Activated CD8-positive, alpha-beta T cell treated with anti-CD3 and anti-CD28 coated beads, Interleukin-2, amount 10 ng/mL, durations not matched to agents 7 days and 5 days (primary cell): ENCODE measurements at regions of chrX and their contacts with region 1.

Region 1: DNA sequence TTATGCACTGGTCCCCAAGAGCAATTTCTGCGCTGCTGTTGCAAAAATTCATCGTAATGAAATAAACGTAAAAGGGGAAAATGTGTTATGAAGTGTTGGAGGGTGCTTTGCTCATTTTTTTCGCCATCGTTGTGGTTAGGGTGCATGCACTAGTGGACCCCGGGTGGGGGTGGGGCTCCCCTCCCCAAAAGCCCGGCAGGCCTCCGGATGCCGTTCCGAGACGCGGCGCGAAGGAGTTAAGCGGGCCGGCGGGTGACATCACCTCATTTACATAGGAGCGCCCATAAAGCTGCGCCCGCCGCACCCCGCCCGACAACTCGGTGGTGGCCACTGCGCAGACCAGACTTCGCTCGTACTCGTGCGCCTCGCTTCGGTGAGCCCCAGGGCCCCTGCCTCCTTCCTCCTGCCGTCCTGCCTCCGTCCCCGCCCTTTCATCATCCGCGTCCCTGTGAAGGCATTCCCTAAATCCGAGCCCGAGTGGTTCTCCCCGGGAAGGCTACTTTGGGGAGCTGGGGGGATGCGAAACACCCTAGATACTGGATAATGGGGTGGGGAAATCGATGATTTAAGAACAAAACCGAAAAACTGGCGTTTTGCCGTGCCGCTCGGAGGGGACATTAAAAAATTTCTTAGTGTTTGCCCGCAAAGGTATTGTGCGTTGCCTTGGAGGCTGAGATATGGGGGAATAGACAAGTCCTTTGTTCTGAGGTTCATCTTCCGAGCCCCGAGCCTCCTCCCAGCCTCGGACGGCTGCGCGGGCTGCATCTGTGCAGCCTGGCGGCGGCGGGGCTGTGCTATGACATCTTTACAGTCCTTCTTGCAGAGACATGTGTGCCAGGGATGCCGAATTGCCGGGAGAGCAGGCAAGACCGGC is at the start of gene TMSB4X:
- DNase-seq: peak; percentile 90
- ATAC-seq: peak; percentile 61
- H3K4me3 Mint-ChIP-seq: peak within 1 kb of the TSS; percentile 95
- H3K27ac Mint-ChIP-seq: peak within 1 kb of the TSS; percentile 99
- H3K4me1 Mint-ChIP-seq: peaks cover 30% of the 10 kb centered on the region
- H3K27me3 Mint-ChIP-seq: no peaks in the 10 kb centered on the region
- total RNA-seq, gene TMSB4X: 8,800 to 8,961 TPM

Region 2: GRCh38 chrX:12919051-12919450 is 56.0 kb before region 1 on chrX:
- CTCF ChIA-PET with region 1: no interaction called
- POLR2A ChIA-PET with region 1: no interaction called
- DNase-seq: no peak
- ATAC-seq: no peak
- H3K4me3 Mint-ChIP-seq: no peak overlapping the region
- H3K27ac Mint-ChIP-seq: no peak overlapping the region
- H3K4me1 Mint-ChIP-seq: peaks cover 3% of the 10 kb centered on the region
- H3K27me3 Mint-ChIP-seq: no peaks in the 10 kb centered on the region

Region 3: DNA sequence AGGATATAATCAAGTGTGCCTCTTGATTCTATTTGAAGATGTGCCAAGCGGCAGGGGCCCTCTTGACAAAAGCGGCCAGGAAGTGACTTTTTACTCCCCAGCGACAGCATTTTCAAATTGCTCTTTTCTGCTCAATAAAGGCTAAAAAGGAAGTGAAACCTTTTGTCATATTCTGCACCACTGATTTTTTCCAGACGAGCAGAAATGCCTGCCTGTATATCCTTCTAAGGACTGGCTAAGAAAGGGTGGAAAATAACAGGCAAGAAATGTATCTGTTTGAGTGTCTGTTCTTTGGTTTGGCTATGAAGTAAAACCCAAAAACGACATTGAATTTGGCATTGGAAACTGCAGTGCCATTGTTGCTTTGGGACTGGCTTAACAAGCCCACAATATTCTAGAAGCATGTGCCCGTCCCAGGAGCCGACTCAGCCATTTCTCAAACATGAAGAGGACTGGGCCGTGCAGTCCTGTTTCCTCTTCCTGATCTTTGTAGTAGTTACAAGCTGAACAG is 25.3 kb after region 1 on chrX:
- CTCF ChIA-PET with region 1: interaction called, 12 read pairs
- POLR2A ChIA-PET with region 1: interaction called, 211 read pairs
- DNase-seq: peak; percentile 58
- ATAC-seq: peak; percentile 59
- H3K4me3 Mint-ChIP-seq: peak overlapping the region; percentile 68
- H3K27ac Mint-ChIP-seq: peak overlapping the region; percentile 96
- H3K4me1 Mint-ChIP-seq: peaks cover 66% of the 10 kb centered on the region
- H3K27me3 Mint-ChIP-seq: no peaks in the 10 kb centered on the region

Region 4: GRCh38 chrX:13005661-13006473 is 30.8 kb after region 1 on chrX:
- CTCF ChIA-PET with region 1: interaction called, 12 read pairs
- POLR2A ChIA-PET with region 1: interaction called, 211 read pairs
- DNase-seq: no peak
- ATAC-seq: peak; percentile 34
- H3K4me3 Mint-ChIP-seq: peak overlapping the region; percentile 58
- H3K27ac Mint-ChIP-seq: peak overlapping the region; percentile 98
- H3K4me1 Mint-ChIP-seq: peaks cover 67% of the 10 kb centered on the region
- H3K27me3 Mint-ChIP-seq: no peaks in the 10 kb centered on the region

Region 5: DNA sequence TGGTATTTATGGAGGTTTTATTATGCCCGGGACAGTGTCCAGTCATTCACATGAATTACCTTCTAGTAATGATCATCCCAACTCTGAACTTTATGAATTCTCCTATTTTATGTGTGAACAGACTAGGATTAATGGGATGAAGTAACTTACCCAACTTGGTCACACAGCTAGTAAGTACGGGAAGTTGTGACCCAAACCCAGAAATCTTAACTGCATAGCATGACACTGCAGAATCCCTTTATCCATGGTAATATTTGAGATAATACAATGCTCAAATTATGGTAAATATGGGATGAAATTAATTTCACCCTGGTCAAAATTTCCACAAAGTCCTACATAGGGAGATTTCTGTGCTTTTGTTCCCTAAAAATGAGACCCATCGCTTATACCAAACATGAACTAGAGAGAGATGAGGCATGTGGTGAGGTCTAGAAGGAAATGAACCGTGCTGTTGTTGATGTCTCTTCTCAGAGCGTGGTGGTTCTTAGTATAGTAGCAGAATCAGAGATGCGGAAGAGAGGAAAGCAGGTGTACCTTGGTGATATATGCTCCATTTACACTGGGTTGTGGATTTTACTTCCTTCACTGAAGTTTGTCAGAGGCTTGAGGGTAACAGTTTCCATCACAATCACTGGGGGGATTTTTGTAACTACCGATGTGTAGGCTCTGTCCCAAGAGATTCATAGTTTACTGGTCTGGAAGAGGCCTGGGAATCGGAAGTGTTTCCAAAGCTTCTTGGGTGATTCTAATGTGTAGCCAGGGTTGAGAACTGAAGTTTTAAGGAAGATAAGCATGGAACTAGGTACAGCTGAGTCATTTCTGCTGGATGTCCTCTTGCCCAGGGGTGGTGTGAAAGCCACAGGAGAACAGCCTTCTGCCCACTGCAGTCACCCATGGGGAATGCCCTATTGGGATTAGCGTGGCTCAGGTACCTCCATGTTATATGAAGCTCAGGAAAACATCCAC is 99.5 kb after region 1 on chrX:
- CTCF ChIA-PET with region 1: interaction called, 4 read pairs
- POLR2A ChIA-PET with region 1: interaction called, 28 read pairs
- DNase-seq: no peak
- ATAC-seq: peak; percentile 72
- H3K4me3 Mint-ChIP-seq: peak overlapping the region; percentile 12
- H3K27ac Mint-ChIP-seq: peak overlapping the region; percentile 80
- H3K4me1 Mint-ChIP-seq: peaks cover 56% of the 10 kb centered on the region
- H3K27me3 Mint-ChIP-seq: no peaks in the 10 kb centered on the region

Region 6: DNA sequence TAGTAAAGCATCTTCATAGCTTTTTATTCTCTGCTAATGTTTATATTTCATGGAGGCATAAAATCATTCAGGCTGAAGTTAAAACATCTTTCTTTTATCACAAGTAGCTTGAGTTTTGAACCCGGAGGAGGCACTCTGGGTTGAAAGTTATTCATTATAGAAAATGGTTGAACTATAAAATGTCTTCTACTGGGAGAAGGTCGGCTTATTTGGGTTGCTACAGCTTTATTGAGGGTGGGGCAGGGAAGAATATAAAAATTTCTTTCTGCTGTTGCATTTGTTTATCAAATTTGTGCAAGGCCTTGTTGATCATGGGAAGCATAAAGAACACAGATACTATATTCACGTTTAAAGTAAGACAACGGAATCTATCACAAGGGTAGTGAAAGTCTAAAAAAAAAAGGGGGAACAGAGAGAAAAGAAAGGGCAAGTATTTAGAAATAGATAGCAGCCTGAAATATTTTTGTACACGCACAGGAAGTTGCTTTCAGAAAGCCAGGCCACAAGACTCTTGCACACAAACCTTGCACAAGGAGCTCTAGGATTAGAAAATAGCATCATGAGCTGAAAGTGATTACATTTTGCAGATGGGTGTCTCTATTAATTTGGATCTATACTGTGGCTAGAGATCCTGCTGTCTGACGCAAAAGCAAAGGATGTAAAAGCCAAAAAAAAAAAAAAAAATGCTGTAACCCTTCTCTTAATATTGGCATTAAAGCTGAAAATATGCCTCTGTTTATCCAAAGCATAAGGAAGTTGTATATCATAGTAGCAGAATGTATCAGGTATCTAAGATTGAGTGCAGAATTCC is 106.6 kb after region 1 on chrX:
- CTCF ChIA-PET with region 1: interaction called, 13 read pairs
- POLR2A ChIA-PET with region 1: interaction called, 779 read pairs
- DNase-seq: no peak
- ATAC-seq: peak; percentile 27
- H3K4me3 Mint-ChIP-seq: peak overlapping the region; percentile 63
- H3K27ac Mint-ChIP-seq: peak overlapping the region; percentile 95
- H3K4me1 Mint-ChIP-seq: peaks cover 90% of the 10 kb centered on the region
- H3K27me3 Mint-ChIP-seq: no peaks in the 10 kb centered on the region

Region 7: DNA sequence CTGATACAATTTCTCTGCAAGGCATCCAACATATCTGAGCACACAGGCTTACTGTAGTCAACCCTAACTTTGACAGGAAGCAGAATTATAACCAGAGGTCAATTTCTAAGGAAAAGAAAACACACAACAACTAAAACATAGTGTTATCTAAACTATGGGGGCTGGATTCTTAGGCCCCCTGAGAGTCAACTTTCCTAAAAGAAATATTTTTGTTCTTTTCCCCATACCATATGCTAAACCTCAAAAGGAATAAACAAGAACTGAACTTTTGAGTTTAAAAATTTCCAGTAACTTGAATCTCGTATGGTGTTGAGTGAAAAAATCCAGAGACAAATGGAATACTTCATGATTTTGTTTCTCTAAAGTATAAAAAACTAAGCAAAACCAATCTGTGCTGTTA is 302.0 kb after region 1 on chrX:
- CTCF ChIA-PET with region 1: no interaction called
- POLR2A ChIA-PET with region 1: no interaction called
- DNase-seq: no peak
- ATAC-seq: no peak
- H3K4me3 Mint-ChIP-seq: no peak overlapping the region
- H3K27ac Mint-ChIP-seq: no peak overlapping the region
- H3K4me1 Mint-ChIP-seq: no peaks in the 10 kb centered on the region
- H3K27me3 Mint-ChIP-seq: no peaks in the 10 kb centered on the region

Region 8: DNA sequence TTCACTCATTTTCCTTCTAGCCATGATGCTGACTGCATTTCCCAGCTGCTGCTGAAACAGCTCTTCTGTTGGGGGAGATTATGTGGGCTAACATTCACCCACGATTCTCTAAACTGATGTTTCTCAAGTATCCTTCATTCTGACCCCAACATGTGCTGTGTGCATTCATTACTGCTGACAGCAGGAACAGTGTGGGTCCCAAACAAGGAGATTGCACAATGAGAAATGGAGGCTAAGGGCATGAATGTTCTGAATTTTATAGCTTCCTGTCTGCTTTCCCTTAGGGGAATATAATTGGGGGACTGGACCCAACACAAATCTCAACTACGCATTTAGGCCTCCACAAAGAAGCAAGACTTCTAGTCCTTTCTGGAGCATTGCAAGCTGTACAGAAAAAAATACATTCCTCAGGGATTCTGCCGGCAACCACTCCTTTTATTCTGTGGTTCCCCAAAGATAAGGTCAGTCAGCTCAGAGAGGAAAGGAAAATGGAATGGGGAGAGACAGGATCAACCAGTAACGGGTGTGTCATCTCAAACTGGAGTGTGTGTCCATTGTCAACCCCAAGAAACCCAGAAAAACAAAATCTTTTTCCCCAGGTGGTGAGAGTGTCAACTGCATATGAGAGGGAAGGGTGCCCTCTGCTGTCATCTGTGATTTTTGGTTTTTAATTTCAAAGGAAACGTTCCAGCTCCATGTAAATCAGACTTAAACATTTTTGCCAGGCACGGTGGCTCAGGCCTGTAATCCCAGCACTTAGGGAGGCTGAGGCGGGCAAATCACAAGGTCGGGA is 512.9 kb after region 1 on chrX:
- CTCF ChIA-PET with region 1: interaction called, 6 read pairs
- POLR2A ChIA-PET with region 1: interaction called, 21 read pairs
- DNase-seq: peak; percentile 62
- ATAC-seq: peak; percentile 84
- H3K4me3 Mint-ChIP-seq: no peak overlapping the region
- H3K27ac Mint-ChIP-seq: peak overlapping the region; percentile 76
- H3K4me1 Mint-ChIP-seq: peaks cover 41% of the 10 kb centered on the region
- H3K27me3 Mint-ChIP-seq: no peaks in the 10 kb centered on the region